ENCODE measurements at regions of chr5 and their contacts with region 1.

Region 1: GRCh38 chr5:146965761-146966659 is 87.5 kb upstream of the PPP2R2B start:
- DNase-seq: peak; percentile 13
- ATAC-seq: peak; percentile 42
- H3K4me3 Mint-ChIP-seq: no peak overlapping the region
- H3K27ac Mint-ChIP-seq: no peak overlapping the region
- H3K4me1 Mint-ChIP-seq: no peaks in the 10 kb centered on the region
- H3K27me3 Mint-ChIP-seq: no peaks in the 10 kb centered on the region
- CTCF ChIP-seq: peak; percentile 82

Region 2: DNA sequence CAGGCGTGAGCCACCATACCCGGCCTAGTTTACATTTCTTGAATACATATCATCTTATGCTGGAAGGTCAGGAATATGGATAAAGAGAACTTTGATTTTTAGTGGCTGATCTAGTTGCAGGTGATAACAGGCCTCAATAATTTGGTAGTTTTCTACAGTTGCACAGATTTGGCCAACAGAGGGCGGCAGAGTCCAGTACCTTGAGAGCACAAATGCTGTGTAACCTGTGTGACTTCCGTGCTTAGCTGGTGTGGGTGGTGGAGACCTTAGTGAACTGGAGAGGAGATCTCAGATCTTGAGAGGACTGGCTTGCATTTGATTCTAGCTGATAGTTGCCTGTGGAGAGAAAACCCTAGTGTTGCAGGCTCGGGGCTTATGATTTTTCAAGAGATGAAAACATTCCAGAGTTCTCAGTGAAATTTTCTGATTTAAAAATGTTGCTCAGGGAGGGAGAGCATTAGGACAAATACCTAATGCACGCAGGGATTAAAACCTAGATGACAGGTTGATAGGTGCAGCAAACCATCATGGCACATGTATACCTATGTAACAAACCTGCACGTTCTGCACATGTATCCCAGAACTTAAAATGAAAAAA is 432.7 kb before region 1 on chr5:
- CTCF ChIA-PET with region 1: interaction called, 18 read pairs
- POLR2A ChIA-PET with region 1: no interaction called
- intact Hi-C with region 1: loop called (anchors 2 kb)
- DNase-seq: peak; percentile 30
- ATAC-seq: peak; percentile 84
- H3K4me3 Mint-ChIP-seq: no peak overlapping the region
- H3K27ac Mint-ChIP-seq: no peak overlapping the region
- H3K4me1 Mint-ChIP-seq: peaks cover 7% of the 10 kb centered on the region
- H3K27me3 Mint-ChIP-seq: no peaks in the 10 kb centered on the region
- CTCF ChIP-seq: peak; percentile 75

Region 3: DNA sequence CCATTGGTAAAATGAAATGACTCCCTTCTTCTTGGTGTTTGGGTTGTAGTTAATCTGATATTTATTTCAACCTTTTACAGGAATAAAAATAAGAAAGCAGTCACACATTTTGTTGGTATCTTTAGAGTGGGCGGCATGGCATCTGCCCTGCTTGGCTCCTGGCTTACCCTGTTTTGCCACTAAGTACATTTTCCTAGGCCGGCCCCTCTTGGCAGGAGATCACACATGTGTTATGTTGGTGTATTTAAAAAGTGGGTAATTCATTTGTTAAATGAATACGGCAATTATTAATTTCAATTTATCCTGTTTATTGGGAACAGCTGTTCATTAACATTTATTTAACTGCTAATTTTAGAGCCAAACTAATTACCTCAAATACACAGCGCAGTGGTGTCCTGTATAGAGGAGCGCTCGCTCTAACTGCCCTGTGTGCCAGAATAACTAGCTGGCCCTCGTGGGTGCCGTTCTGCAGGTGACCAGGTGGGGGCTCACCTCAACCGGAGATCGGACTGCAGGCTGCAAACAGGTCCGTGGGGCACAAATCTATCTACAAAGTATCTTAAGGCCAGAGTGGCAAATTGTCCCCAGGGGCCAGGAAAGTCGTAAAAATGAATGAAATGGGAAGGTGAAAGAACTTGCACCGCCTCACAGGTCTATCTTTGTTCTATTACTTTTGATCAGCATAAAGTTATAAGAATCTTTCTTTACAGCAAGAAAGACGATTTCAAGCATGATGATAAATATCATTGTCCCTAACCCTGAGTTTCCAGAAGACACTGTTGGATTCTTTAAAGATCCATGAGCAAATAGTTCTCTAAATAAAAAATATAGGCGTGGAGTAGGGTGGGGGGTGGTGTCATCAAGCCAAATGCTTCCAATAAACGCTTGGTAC is 423.8 kb before region 1 on chr5:
- CTCF ChIA-PET with region 1: interaction called, 13 read pairs
- POLR2A ChIA-PET with region 1: no interaction called
- intact Hi-C with region 1: loop called (anchors 1 kb)
- DNase-seq: peak; percentile 36
- ATAC-seq: peak; percentile 81
- H3K4me3 Mint-ChIP-seq: no peak overlapping the region
- H3K27ac Mint-ChIP-seq: no peak overlapping the region
- H3K4me1 Mint-ChIP-seq: peaks cover 2% of the 10 kb centered on the region
- H3K27me3 Mint-ChIP-seq: peaks cover 5% of the 10 kb centered on the region
- CTCF ChIP-seq: peak; percentile 33

Region 4: DNA sequence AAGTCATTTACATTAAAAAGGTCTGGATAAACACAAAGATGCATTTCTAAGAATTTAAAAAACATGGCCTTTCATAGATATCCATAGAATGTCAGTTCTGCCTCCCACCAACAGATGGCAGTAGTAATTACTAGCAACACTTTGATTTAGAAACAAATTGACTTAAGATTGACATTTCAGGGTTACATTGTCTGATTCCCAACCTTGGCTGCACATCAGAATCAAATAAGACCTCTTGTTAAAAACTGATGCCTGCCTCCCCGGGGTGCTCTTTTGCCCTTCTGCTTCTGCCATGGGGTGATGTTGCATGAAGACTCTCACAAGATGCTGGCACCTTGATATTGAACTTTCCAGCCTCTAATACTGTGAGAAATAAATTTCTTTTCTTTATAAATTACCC is 303.8 kb before region 1 on chr5:
- CTCF ChIA-PET with region 1: interaction called, 3 read pairs
- POLR2A ChIA-PET with region 1: no interaction called
- intact Hi-C with region 1: loop called (anchors 1 kb)
- DNase-seq: no peak
- ATAC-seq: no peak
- H3K4me3 Mint-ChIP-seq: no peak overlapping the region
- H3K27ac Mint-ChIP-seq: no peak overlapping the region
- H3K4me1 Mint-ChIP-seq: no peaks in the 10 kb centered on the region
- H3K27me3 Mint-ChIP-seq: peaks cover 2% of the 10 kb centered on the region
- CTCF ChIP-seq: no peak

Measured in activated B cell treated with CpG ODN at 0.5 μM for 24 hours (primary cell).